Naive thymus-derived CD4-positive, alpha-beta T cell (primary cell): ENCODE measurements at regions of chr19 and their contacts with region 1.

Region 1: GRCh38 chr19:3762501-3763459 is at the start of gene MRPL54:
- DNase-seq: peak; percentile 98 to 100 (median 100)
- ATAC-seq: peak; percentile 89
- H3K4me3 ChIP-seq: peak within 1 kb of the TSS; percentile 96
- H3K4me3 Mint-ChIP-seq: peak within 1 kb of the TSS; percentile 93 to 99 (median 98)
- H3K27ac ChIP-seq: peak within 1 kb of the TSS; percentile 100
- H3K27ac Mint-ChIP-seq: peak within 1 kb of the TSS; percentile 99 to 100 (median 100)
- H3K4me1 ChIP-seq: peaks cover 19 to 44% of the 10 kb centered on the region in 2 donors
- H3K4me1 Mint-ChIP-seq: peaks cover 23 to 59% (median 39%) of the 10 kb centered on the region in 7 donors
- H3K27me3 ChIP-seq: no peaks in the 10 kb centered on the region
- H3K27me3 Mint-ChIP-seq: peaks cover 0 to 5% (median 0%) of the 10 kb centered on the region in 5 donors
- total RNA-seq, gene MRPL54: 34.0 to 95.2 (median 58.8) TPM

Region 2: GRCh38 chr19:3505598-3506383 is 257.0 kb before region 1 on chr19 and contains the start of gene FZR1:
- CTCF ChIA-PET with region 1: no interaction called
- POLR2A ChIA-PET with region 1: no interaction called
- intact Hi-C with region 1: loop called (anchors 1 to 5 kb)
- DNase-seq: peak; percentile 98 to 100 (median 100)
- ATAC-seq: peak; percentile 96
- H3K4me3 ChIP-seq: peak within 1 kb of the TSS; percentile 97
- H3K4me3 Mint-ChIP-seq: peak within 1 kb of the TSS; percentile 88 to 98 (median 92)
- H3K27ac ChIP-seq: peak within 1 kb of the TSS; percentile 95
- H3K27ac Mint-ChIP-seq: peak within 1 kb of the TSS; percentile 91 to 98 (median 96)
- H3K4me1 ChIP-seq: peaks cover 14 to 23% of the 10 kb centered on the region in 2 donors
- H3K4me1 Mint-ChIP-seq: peaks cover 29 to 57% (median 44%) of the 10 kb centered on the region in 7 donors
- H3K27me3 ChIP-seq: no peaks in the 10 kb centered on the region
- H3K27me3 Mint-ChIP-seq: peaks cover 0 to 3% (median 0%) of the 10 kb centered on the region in 5 donors
- total RNA-seq, gene FZR1: 60.7 to 90.7 (median 71.3) TPM

Region 3: GRCh38 chr19:3642987-3643673 is 119.7 kb before region 1 on chr19:
- CTCF ChIA-PET with region 1: no interaction called
- POLR2A ChIA-PET with region 1: no interaction called
- intact Hi-C with region 1: no loop called
- DNase-seq: no peak
- ATAC-seq: peak; percentile 38
- H3K4me3 ChIP-seq: no peak overlapping the region
- H3K4me3 Mint-ChIP-seq: no peak overlapping the region
- H3K27ac ChIP-seq: no peak overlapping the region
- H3K27ac Mint-ChIP-seq: no peak overlapping the region
- H3K4me1 ChIP-seq: no peaks in the 10 kb centered on the region
- H3K4me1 Mint-ChIP-seq: peaks cover 0 to 2% (median 0%) of the 10 kb centered on the region in 7 donors
- H3K27me3 ChIP-seq: no peaks in the 10 kb centered on the region
- H3K27me3 Mint-ChIP-seq: no peaks in the 10 kb centered on the region

Region 4: GRCh38 chr19:3700221-3701032 is 62.4 kb before region 1 on chr19 and contains the start of gene PIP5K1C:
- CTCF ChIA-PET with region 1: no interaction called
- POLR2A ChIA-PET with region 1: interaction called, 10 read pairs
- intact Hi-C with region 1: loop called in 1 of 2 experiments (anchors 1 kb)
- DNase-seq: peak; percentile 82 to 98 (median 90)
- ATAC-seq: peak; percentile 100
- H3K4me3 ChIP-seq: peak within 1 kb of the TSS; percentile 66
- H3K4me3 Mint-ChIP-seq: peak within 1 kb of the TSS; percentile 88 to 97 (median 92)
- H3K27ac ChIP-seq: peak within 1 kb of the TSS; percentile 67
- H3K27ac Mint-ChIP-seq: peak within 1 kb of the TSS in 8 of 9 donors; percentile 60 to 91 (median 82)
- H3K4me1 ChIP-seq: peaks cover 0 to 9% of the 10 kb centered on the region in 2 donors
- H3K4me1 Mint-ChIP-seq: peaks cover 6 to 41% (median 28%) of the 10 kb centered on the region in 7 donors
- H3K27me3 ChIP-seq: no peaks in the 10 kb centered on the region
- H3K27me3 Mint-ChIP-seq: peaks cover 0 to 6% (median 0%) of the 10 kb centered on the region in 5 donors
- total RNA-seq, gene PIP5K1C: 21.5 to 32.4 (median 30.7) TPM

Region 5: GRCh38 chr19:3816566-3817218 is 53.9 kb after region 1 on chr19:
- CTCF ChIA-PET with region 1: interaction called, 20 read pairs
- POLR2A ChIA-PET with region 1: interaction called, 43 read pairs
- intact Hi-C with region 1: loop called in 1 of 2 experiments (anchors 2 kb)
- DNase-seq: no peak
- ATAC-seq: no peak
- H3K4me3 ChIP-seq: no peak overlapping the region
- H3K4me3 Mint-ChIP-seq: no peak overlapping the region
- H3K27ac ChIP-seq: no peak overlapping the region
- H3K27ac Mint-ChIP-seq: no peak overlapping the region
- H3K4me1 ChIP-seq: peaks cover 32 to 44% of the 10 kb centered on the region in 2 donors
- H3K4me1 Mint-ChIP-seq: peaks cover 28 to 67% (median 45%) of the 10 kb centered on the region in 7 donors
- H3K27me3 ChIP-seq: no peaks in the 10 kb centered on the region
- H3K27me3 Mint-ChIP-seq: no peaks in the 10 kb centered on the region

Region 6: DNA sequence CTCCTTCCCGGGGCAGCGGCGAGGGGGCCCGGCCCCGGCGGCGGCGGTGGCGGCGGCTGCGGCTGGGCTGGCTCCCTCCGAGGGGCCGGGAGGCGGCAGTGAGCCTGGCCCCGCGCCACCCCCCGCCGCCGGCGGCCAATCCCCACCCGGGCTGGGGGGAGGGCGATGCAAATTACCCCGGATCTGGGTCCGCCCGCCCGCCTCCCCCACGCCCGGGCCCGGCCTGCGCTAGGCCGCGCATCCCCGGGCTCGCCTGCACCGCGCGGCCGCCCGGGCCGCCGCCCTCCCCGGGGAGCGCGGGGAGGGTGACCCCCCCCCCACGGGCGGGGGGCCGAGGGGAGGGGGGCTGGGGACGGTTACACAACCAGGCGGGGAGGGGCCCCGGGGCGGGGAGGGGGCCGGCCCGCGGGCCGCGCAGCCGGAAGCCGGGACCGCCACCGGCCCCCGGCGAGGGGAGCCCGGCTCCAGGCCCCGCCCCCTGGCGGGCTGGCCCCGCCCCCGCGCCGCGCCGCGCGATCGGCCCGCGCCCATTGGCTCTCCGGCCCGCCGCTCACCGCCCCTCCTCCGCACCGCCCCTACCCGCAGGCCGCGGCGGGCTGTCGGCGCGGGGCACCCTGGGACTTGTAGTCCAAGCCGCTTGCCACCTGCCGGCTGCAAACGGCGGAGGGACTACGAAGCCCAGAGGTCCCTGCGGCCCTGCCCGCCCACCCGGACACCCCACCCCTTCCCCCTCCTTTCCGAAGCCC is 302.8 kb after region 1 on chr19:
- CTCF ChIA-PET with region 1: no interaction called
- POLR2A ChIA-PET with region 1: no interaction called
- intact Hi-C with region 1: loop called in 1 of 2 experiments (anchors 2 kb)
- DNase-seq: peak; percentile 97 to 99 (median 98)
- ATAC-seq: peak; percentile 89
- H3K4me3 ChIP-seq: no peak overlapping the region
- H3K4me3 Mint-ChIP-seq: peak overlapping the region; percentile 29 to 90 (median 67)
- H3K27ac ChIP-seq: peak overlapping the region; percentile 95
- H3K27ac Mint-ChIP-seq: peak overlapping the region in 6 of 9 donors; percentile 12 to 86 (median 66)
- H3K4me1 ChIP-seq: peaks cover 41 to 56% of the 10 kb centered on the region in 2 donors
- H3K4me1 Mint-ChIP-seq: peaks cover under 1 to 42% (median 26%) of the 10 kb centered on the region in 7 donors
- H3K27me3 ChIP-seq: no peaks in the 10 kb centered on the region
- H3K27me3 Mint-ChIP-seq: no peaks in the 10 kb centered on the region

Region 7: GRCh38 chr19:4723367-4724187 is 960.8 kb after region 1 on chr19 and contains the start of gene DPP9:
- CTCF ChIA-PET with region 1: no interaction called
- POLR2A ChIA-PET with region 1: no interaction called
- intact Hi-C with region 1: loop called in 1 of 2 experiments (anchors 5 kb)
- DNase-seq: peak; percentile 84 to 100 (median 99)
- ATAC-seq: peak; percentile 99
- H3K4me3 ChIP-seq: peak within 1 kb of the TSS; percentile 96
- H3K4me3 Mint-ChIP-seq: peak within 1 kb of the TSS; percentile 83 to 99 (median 95)
- H3K27ac ChIP-seq: peak within 1 kb of the TSS; percentile 87
- H3K27ac Mint-ChIP-seq: peak within 1 kb of the TSS; percentile 93 to 100 (median 98)
- H3K4me1 ChIP-seq: peaks cover 19 to 26% of the 10 kb centered on the region in 2 donors
- H3K4me1 Mint-ChIP-seq: peaks cover 21 to 48% (median 37%) of the 10 kb centered on the region in 7 donors
- H3K27me3 ChIP-seq: no peaks in the 10 kb centered on the region
- H3K27me3 Mint-ChIP-seq: peaks cover 0 to 10% (median 5%) of the 10 kb centered on the region in 5 donors
- total RNA-seq, gene DPP9: 71.2 to 90.7 (median 81.4) TPM

Region 8: GRCh38 chr19:4877753-4878490 is 1115.1 kb after region 1 on chr19:
- CTCF ChIA-PET with region 1: no interaction called
- POLR2A ChIA-PET with region 1: no interaction called
- intact Hi-C with region 1: no loop called
- DNase-seq: peak in 1 of 9 donors; percentile 8
- ATAC-seq: no peak
- H3K4me3 ChIP-seq: no peak overlapping the region
- H3K4me3 Mint-ChIP-seq: peak overlapping the region in 2 of 10 donors; percentile 44 to 53
- H3K27ac ChIP-seq: no peak overlapping the region
- H3K27ac Mint-ChIP-seq: no peak overlapping the region
- H3K4me1 ChIP-seq: peaks cover 0 to 16% of the 10 kb centered on the region in 2 donors
- H3K4me1 Mint-ChIP-seq: peaks cover 0 to 10% (median 5%) of the 10 kb centered on the region in 7 donors
- H3K27me3 ChIP-seq: no peaks in the 10 kb centered on the region
- H3K27me3 Mint-ChIP-seq: peaks cover 0 to 7% (median 0%) of the 10 kb centered on the region in 5 donors